Dorsolateral prefrontal cortex (tissue), 120 donors: ENCODE measurements at regions of chr15 and their contacts with region 1.

Region 1: GRCh38 chr15:82809404-82810060 is at the start of gene WHAMM:
- DNase-seq: peak; percentile 97 to 99 (median 98)
- H3K4me3 ChIP-seq: peak within 1 kb of the TSS; percentile 61 to 95 (median 86)
- H3K27ac ChIP-seq: peak within 1 kb of the TSS; percentile 90 to 100 (median 97)
- H3K27me3 ChIP-seq: no peaks in the 10 kb centered on the region
- CTCF ChIP-seq: peak in 29 of 56 donors; percentile 11 to 51 (median 27)
- total RNA-seq, gene WHAMM: 7.8 to 16.0 (median 11.1) TPM

Region 2: DNA sequence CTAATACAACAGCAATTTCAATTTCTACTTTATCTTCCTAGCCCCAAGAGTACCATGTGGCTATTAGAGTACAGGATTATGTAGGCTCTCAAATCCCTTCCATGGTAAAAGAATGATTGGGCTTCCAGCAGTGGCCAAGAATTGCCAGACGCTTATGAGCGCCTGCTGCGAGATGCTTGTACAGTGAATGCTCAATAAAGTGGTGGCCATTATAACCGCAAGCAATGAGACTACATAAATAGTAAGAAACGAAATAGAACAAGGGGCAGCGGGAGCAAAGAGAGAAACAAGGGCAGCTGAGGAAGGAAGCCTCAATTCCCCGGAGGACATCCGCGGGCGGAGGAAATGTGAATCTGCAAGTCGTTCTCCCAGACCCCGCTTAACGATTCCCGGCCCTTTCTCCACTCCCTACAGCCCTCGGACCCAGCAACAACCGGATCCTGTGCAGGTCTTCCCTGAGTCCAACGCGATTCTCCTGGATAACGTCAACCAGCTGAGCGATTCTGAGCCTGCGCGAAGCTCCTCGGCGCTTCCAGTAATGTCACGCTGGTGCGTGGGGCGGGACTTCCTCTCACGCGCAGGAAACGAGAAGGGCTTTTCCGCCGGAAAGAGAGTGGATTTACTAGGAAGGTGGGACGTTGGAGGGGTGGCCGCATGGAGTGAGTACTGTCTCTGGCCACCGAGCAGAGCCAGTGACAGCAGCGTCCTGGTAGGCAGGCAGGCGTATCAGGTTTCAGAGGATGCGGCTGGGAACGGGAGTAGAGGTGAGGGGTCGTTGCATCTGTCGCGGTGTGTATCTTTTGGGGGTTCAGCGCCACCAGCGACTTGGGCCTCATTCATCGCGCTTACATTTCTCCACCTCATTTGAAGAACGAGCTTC is 59.3 kb before region 1 on chr15:
- intact Hi-C with region 1: loop called (anchors 1 to 2 kb)
- DNase-seq: peak; percentile 89 to 97 (median 94)
- H3K4me3 ChIP-seq: peak overlapping the region; percentile 57 to 99 (median 91)
- H3K27ac ChIP-seq: peak overlapping the region; percentile 63 to 98 (median 92)
- H3K27me3 ChIP-seq: no peaks in the 10 kb centered on the region
- CTCF ChIP-seq: peak in 28 of 56 donors; percentile 7 to 57 (median 26)

Region 3: GRCh38 chr15:82900511-82901060 is 91.1 kb after region 1 on chr15:
- intact Hi-C with region 1: no loop called
- DNase-seq: no peak
- H3K4me3 ChIP-seq: no peak overlapping the region
- H3K27ac ChIP-seq: no peak overlapping the region
- H3K27me3 ChIP-seq: no peaks in the 10 kb centered on the region
- CTCF ChIP-seq: no peak

Region 4: DNA sequence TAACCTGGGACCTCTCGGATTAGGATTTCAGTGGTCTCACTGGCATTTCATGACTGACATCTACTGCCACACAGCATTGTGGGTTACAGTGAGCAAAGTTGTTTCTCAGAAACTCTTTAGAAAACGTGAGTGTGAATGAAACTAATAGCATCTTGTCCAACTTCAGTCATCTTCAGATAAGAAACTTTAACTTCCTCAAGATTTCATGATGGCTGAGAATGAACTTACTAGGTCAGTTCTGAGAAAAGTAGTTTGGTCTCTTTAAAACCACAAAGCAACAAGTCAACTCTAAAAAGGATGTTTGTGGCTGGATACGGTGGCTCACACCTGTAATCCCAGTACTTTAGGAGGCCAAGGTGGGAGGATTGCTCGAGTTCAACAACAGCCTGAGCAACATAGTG is 157.1 kb after region 1 on chr15:
- intact Hi-C with region 1: no loop called
- DNase-seq: no peak
- H3K4me3 ChIP-seq: no peak overlapping the region
- H3K27ac ChIP-seq: no peak overlapping the region
- H3K27me3 ChIP-seq: no peaks in the 10 kb centered on the region
- CTCF ChIP-seq: no peak

Region 5: DNA sequence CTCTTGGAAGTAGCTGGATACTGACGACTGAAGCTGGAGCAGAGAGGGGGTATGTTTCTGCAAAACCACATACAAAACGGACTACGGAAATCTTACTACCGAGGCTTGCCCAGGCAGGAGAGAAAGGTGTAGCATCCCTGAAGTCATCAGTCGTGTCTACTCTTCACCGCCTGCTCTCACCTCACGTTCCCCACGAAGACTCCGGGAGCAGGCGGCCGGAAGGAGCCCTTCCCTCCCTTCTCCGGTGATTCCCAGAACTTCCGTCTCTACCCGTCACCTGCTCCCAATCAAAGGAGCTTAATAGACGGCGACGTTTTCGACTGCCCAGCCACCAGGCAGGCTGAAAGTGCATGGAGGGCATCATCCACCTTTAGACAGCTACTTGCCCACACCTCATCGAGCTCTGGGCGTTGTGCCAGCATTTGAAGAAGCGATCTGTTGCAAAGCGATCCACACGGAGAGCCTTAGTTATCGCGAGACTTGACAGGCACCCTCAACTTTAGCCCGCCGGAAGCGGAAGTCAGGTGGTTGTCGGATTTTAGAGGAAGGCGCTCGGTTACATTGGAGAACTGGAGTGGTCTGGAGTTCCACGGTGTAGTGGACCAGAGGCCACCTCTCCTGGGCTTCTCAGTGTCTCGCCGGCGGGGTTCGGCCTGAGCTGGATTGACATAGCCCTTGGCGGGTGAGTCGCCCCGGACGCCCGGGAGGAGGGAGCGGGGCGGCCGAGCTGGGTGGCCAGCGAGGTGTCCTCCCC is 176.3 kb after region 1 on chr15 and contains the start of gene RAMAC:
- intact Hi-C with region 1: loop called (anchors 5 to 10 kb)
- DNase-seq: peak; percentile 89 to 98 (median 96)
- H3K4me3 ChIP-seq: peak within 1 kb of the TSS; percentile 62 to 100 (median 87)
- H3K27ac ChIP-seq: peak within 1 kb of the TSS in 58 of 59 donors; percentile 19 to 93 (median 78)
- H3K27me3 ChIP-seq: no peaks in the 10 kb centered on the region
- CTCF ChIP-seq: peak in 22 of 56 donors; percentile 6 to 39 (median 23)
- total RNA-seq, gene RAMAC: 4.9 to 24.6 (median 17.0) TPM